Activated CD4-positive, alpha-beta memory T cell treated with anti-CD3 and anti-CD28 coated beads, Interleukin-2, amount 10 ng/mL, durations not matched to agents 7 days and 5 days (primary cell): ENCODE measurements at regions of chr12 and their contacts with region 1.

Region 1: GRCh38 chr12:95072900-95073697 is at the start of gene NR2C1:
- DNase-seq: peak; percentile 94
- H3K4me3 Mint-ChIP-seq: peak within 1 kb of the TSS; percentile 82
- H3K27ac Mint-ChIP-seq: peak within 1 kb of the TSS; percentile 71
- H3K4me1 Mint-ChIP-seq: peaks cover 12% of the 10 kb centered on the region
- H3K27me3 Mint-ChIP-seq: no peaks in the 10 kb centered on the region
- total RNA-seq, gene NR2C1: 36.0 to 41.6 TPM

Region 2: GRCh38 chr12:94941440-94941862 is 131.6 kb before region 1 on chr12:
- CTCF ChIA-PET with region 1: interaction called, 13 read pairs
- POLR2A ChIA-PET with region 1: interaction called, 5 read pairs
- DNase-seq: peak; percentile 80
- H3K4me3 Mint-ChIP-seq: peak overlapping the region; percentile 21
- H3K27ac Mint-ChIP-seq: peak overlapping the region; percentile 81
- H3K4me1 Mint-ChIP-seq: peaks cover 58% of the 10 kb centered on the region
- H3K27me3 Mint-ChIP-seq: no peaks in the 10 kb centered on the region

Region 3: DNA sequence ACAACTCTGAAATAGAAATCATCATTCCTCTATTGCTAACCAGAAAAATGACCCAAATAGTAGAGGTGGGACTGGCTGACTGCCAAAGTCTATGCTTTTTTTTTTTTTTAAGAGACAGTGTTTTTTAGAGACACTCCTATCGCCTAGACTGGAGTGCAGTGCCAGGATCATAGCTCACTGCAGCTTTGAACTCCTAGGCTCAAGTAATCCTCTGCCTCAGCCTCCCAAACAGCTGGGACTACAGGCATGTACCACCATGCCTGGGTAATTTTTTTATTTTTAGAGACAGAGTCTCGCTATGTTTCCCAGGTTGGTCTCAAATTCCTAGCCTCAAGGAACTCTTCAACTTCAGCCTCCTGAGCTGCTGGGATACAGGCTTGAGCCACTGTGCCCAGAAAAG is 18.9 kb before region 1 on chr12:
- CTCF ChIA-PET with region 1: interaction called, 11 read pairs
- POLR2A ChIA-PET with region 1: interaction called, 5 read pairs
- DNase-seq: no peak
- H3K4me3 Mint-ChIP-seq: no peak overlapping the region
- H3K27ac Mint-ChIP-seq: no peak overlapping the region
- H3K4me1 Mint-ChIP-seq: no peaks in the 10 kb centered on the region
- H3K27me3 Mint-ChIP-seq: no peaks in the 10 kb centered on the region

Region 4: GRCh38 chr12:95102916-95103671 is 30.0 kb after region 1 on chr12:
- CTCF ChIA-PET with region 1: interaction called, 4 read pairs
- POLR2A ChIA-PET with region 1: interaction called, 10 read pairs
- DNase-seq: peak; percentile 65
- H3K4me3 Mint-ChIP-seq: peak overlapping the region; percentile 12
- H3K27ac Mint-ChIP-seq: peak overlapping the region; percentile 80
- H3K4me1 Mint-ChIP-seq: peaks cover 23% of the 10 kb centered on the region
- H3K27me3 Mint-ChIP-seq: peaks cover 4% of the 10 kb centered on the region

Region 5: GRCh38 chr12:95473884-95474659 is 401.0 kb after region 1 on chr12 and contains the start of gene METAP2:
- CTCF ChIA-PET with region 1: interaction called, 10 read pairs
- POLR2A ChIA-PET with region 1: interaction called, 17 read pairs
- DNase-seq: peak; percentile 90
- H3K4me3 Mint-ChIP-seq: peak within 1 kb of the TSS; percentile 100
- H3K27ac Mint-ChIP-seq: peak within 1 kb of the TSS; percentile 96
- H3K4me1 Mint-ChIP-seq: peaks cover 40% of the 10 kb centered on the region
- H3K27me3 Mint-ChIP-seq: peaks cover 2% of the 10 kb centered on the region
- total RNA-seq, gene METAP2: 66.1 to 71.5 TPM